CD4-positive, alpha-beta T cell (primary cell): ENCODE measurements at regions of chr6 and their contacts with region 1.

Region 1: GRCh38 chr6:143060354-143060805 is 309 bp upstream of the AIG1 start:
- DNase-seq: peak; percentile 50 to 90 (median 68)
- ATAC-seq: peak; percentile 60
- H3K4me3 ChIP-seq: peak overlapping the region; percentile 94
- H3K4me3 Mint-ChIP-seq: peak overlapping the region; percentile 98
- H3K27ac ChIP-seq: peak overlapping the region; percentile 60 to 81
- H3K27ac Mint-ChIP-seq: peak overlapping the region; percentile 98
- H3K4me1 ChIP-seq: peaks cover 19% of the 10 kb centered on the region
- H3K4me1 Mint-ChIP-seq: peaks cover 28% of the 10 kb centered on the region
- H3K27me3 ChIP-seq: no peaks in the 10 kb centered on the region
- H3K27me3 Mint-ChIP-seq: no peaks in the 10 kb centered on the region
- CTCF ChIP-seq: peak; percentile 42

Region 2: DNA sequence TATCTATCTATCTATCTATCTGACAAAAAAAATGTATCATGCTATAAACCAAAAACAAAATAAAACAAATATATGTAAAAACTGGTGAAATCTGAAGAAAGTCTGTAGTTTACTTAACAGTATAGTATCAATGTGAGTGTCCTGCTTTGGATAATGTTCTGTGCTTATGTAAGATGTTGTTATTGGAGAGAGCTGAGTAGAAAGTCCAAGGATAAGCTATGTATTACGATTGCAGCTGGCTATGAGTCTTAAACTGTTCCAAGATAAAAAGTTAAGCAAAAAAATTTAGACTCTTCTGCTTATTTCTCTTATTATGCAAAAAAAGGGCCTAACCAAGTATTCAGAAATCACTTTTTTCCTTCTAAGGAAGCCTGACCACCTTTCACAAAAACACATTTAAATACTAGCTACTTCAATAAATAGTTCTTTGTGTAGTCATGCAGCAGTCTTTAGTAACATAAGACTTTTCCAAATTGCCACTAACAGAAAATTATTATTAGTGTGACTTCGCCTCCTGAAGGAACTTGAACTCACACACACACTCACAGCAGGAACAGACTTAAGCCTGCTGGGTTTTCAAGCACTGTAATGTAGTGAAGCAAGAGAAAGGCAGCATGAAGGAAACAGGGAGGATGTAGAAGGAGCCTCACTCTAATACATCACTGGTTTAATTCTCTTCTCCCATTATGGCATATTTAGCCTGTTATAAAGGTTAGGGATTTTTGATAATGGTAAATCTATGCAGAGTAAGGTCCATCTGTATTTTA is 1193.5 kb before region 1 on chr6:
- CTCF ChIA-PET with region 1: no interaction called
- POLR2A ChIA-PET with region 1: no interaction called
- intact Hi-C with region 1: no loop called
- DNase-seq: no peak
- ATAC-seq: no peak
- H3K4me3 ChIP-seq: no peak overlapping the region
- H3K4me3 Mint-ChIP-seq: no peak overlapping the region
- H3K27ac ChIP-seq: no peak overlapping the region
- H3K27ac Mint-ChIP-seq: no peak overlapping the region
- H3K4me1 ChIP-seq: no peaks in the 10 kb centered on the region
- H3K4me1 Mint-ChIP-seq: no peaks in the 10 kb centered on the region
- H3K27me3 ChIP-seq: no peaks in the 10 kb centered on the region
- H3K27me3 Mint-ChIP-seq: no peaks in the 10 kb centered on the region
- CTCF ChIP-seq: no peak

Region 3: GRCh38 chr6:142349187-142349823 is 711.1 kb before region 1 on chr6:
- CTCF ChIA-PET with region 1: no interaction called
- POLR2A ChIA-PET with region 1: no interaction called
- intact Hi-C with region 1: no loop called
- DNase-seq: no peak
- ATAC-seq: no peak
- H3K4me3 ChIP-seq: no peak overlapping the region
- H3K4me3 Mint-ChIP-seq: no peak overlapping the region
- H3K27ac ChIP-seq: no peak overlapping the region
- H3K27ac Mint-ChIP-seq: no peak overlapping the region
- H3K4me1 ChIP-seq: no peaks in the 10 kb centered on the region
- H3K4me1 Mint-ChIP-seq: no peaks in the 10 kb centered on the region
- H3K27me3 ChIP-seq: no peaks in the 10 kb centered on the region
- H3K27me3 Mint-ChIP-seq: peaks cover under 1% of the 10 kb centered on the region
- CTCF ChIP-seq: no peak

Region 4: GRCh38 chr6:143450453-143451371 is 390.3 kb after region 1 on chr6 and contains the starts of genes ADAT2 and PEX3:
- CTCF ChIA-PET with region 1: no interaction called
- POLR2A ChIA-PET with region 1: no interaction called
- intact Hi-C with region 1: loop called in 1 of 2 experiments (anchors 10 kb)
- DNase-seq: peak; percentile 85 to 97 (median 90)
- ATAC-seq: peak; percentile 90
- H3K4me3 ChIP-seq: peak within 1 kb of the TSS; percentile 72
- H3K4me3 Mint-ChIP-seq: peak within 1 kb of the TSS; percentile 99
- H3K27ac ChIP-seq: peak within 1 kb of the TSS; percentile 72 to 78
- H3K27ac Mint-ChIP-seq: peak within 1 kb of the TSS; percentile 94
- H3K4me1 ChIP-seq: peaks cover 15% of the 10 kb centered on the region
- H3K4me1 Mint-ChIP-seq: peaks cover 60% of the 10 kb centered on the region
- H3K27me3 ChIP-seq: no peaks in the 10 kb centered on the region
- H3K27me3 Mint-ChIP-seq: no peaks in the 10 kb centered on the region
- CTCF ChIP-seq: no peak
- total RNA-seq, gene ADAT2: 14.6 to 17.4 TPM
- total RNA-seq, gene PEX3: 7.3 to 9.7 TPM